HEK293T (cell line): ENCODE measurements at regions of chr4 and their contacts with region 1.

Region 1: DNA sequence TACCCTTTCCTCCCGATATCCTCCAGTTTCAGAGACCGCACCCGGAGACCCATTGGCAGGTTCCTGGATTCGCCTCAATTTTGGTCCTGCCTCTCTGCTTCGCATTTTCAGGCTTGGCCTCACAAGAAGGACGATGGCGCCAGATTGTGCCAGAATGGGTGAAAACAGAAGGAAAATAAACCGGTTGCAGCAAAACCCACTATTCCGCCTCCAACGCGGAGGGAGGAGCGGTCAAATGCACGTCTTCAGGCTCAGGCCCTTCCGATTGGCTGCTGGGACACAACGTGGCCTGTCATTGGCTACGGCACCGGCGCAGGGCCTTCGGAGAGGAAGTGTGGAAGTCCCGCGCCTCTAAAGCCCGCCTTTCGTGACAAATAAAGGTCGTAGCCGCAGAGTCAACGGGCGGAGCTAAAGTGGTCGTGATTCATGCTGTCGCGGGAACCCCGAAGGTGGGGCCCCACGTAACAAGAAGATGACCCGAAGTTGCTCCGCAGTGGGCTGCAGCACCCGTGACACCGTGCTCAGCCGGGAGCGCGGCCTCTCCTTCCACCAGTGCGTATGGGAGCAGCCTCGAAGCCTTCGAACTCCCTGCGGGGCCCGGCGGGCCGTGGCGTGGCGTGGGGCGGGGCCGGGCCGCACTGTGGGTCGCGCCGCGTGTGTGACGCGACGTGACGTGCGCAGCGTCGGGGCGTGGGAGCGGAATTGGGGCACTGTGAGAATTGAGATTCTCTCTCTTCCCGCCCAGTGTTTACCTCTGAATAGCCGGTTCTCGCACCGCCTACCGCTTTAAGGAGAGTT is at the start of gene THAP9:
- DNase-seq: peak; percentile 88

Region 2: GRCh38 chr4:82823062-82823461 is 77.5 kb before region 1 on chr4:
- CTCF ChIA-PET with region 1: no interaction called
- POLR2A ChIA-PET with region 1: no interaction called
- DNase-seq: no peak

Region 3: GRCh38 chr4:83034630-83035494 is 134.3 kb after region 1 on chr4 and contains the start of gene COPS4:
- CTCF ChIA-PET with region 1: no interaction called
- POLR2A ChIA-PET with region 1: interaction called, 17 read pairs
- DNase-seq: peak; percentile 96